H1 (cell line): ENCODE measurements at regions of chr3 and their contacts with region 1.

Region 1: DNA sequence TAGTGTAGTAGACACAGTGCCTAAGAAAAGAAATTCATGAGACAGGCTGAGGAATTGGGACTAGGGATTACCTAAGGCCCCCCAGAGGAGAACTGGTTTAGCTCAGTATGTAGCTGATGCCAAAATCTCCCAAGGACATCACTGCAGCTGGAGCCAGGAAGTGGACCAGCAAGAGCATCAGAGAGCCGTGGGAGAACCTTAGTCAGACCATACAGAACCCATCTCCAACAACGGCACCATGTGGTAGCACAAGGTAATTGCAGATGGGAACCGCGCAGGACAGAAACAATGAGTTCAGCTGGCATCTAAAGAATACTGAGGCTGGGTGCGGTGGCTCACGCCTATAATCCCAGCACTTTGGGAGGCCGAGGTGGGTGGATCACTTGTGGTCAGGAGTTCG is 81.7 kb downstream of the WNT5A start:
- DNase-seq: peak; percentile 49 to 85
- H3K4me3 ChIP-seq: no peak overlapping the region
- H3K27ac ChIP-seq: no peak overlapping the region
- H3K4me1 ChIP-seq: no peaks in the 10 kb centered on the region
- H3K27me3 ChIP-seq: no peaks in the 10 kb centered on the region
- CTCF ChIP-seq: peak; percentile 84 to 89 (median 85)
- EP300 ChIP-seq: no peak
- POLR2A ChIP-seq: no peak
- RAD21 ChIP-seq: peak; percentile 92 to 94

Region 2: DNA sequence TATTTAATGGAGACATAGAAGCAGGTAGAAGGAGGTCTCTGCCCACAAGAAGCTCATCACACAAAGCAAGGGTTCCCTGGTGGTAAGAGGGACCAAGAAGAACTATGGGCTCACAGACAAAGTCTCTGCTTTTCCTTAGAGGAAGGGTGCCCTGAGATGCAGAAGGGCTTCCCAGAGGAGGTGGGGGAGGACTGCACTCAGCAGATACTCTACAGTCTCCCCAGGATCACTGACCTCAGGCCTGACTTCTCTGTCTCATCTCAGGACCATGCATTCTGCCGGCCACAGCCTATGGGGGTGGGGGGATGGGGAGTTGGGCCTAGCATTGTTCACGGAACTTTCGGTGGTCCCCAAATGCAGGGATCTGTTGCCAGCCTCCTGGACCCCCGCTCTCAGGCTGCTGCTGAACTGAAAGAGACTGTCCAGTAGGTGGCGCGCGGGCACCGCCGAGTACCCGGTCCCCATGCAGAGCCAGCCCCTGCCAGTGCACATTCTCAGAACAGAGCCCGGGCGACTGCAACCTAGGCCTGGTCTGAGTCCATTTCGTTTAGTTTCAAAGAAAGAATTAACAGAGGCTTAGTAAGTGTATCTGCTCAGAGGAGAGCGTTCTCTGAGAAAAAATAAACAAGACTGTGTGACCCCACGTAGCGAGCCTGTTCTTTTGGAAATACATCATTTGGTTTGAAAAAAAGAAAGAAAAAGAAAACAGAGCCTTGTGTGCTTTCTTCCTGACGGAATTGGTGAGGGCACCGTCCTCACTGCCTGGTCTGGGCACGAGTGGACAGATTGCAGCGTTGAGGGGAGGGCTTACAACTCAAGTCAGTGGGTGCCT is 551.6 kb before region 1 on chr3:
- CTCF ChIA-PET with region 1: interaction called, 25 read pairs
- POLR2A ChIA-PET with region 1: no interaction called
- DNase-seq: peak; percentile 36 to 93
- H3K4me3 ChIP-seq: no peak overlapping the region
- H3K27ac ChIP-seq: no peak overlapping the region
- H3K4me1 ChIP-seq: peaks cover 0 to 15% (median 9%) of the 10 kb centered on the region in 4 experiments; a peak in 5 of 7 replicates
- H3K27me3 ChIP-seq: 0 out of 7 replicates have a peak, but pooled peaks cover 0 to 2% (median 0%) of the 10 kb centered on the region in 4 experiments
- CTCF ChIP-seq: peak; percentile 81 to 94 (median 87)
- EP300 ChIP-seq: no peak
- POLR2A ChIP-seq: no peak
- RAD21 ChIP-seq: peak; percentile 95 to 97